Ascending aorta (tissue), 2 donors: ENCODE measurements at regions of chr17 and their contacts with region 1.

Region 1: GRCh38 chr17:47895856-47896671 is at the start of gene SP2:
- DNase-seq: peak; percentile 100
- H3K4me3 ChIP-seq: peak within 1 kb of the TSS; percentile 76 to 84
- H3K27ac ChIP-seq: peak within 1 kb of the TSS; percentile 96 to 100
- H3K4me1 ChIP-seq: peaks cover 4 to 35% of the 10 kb centered on the region in 2 donors
- H3K27me3 ChIP-seq: no peaks in the 10 kb centered on the region
- CTCF ChIP-seq: peak in 1 of 3 experiments; percentile 6
- total RNA-seq, gene SP2: 198 TPM

Region 2: GRCh38 chr17:47698749-47699535 is 197.1 kb before region 1 on chr17:
- intact Hi-C with region 1: loop called (anchors 10 kb)
- DNase-seq: no peak
- H3K4me3 ChIP-seq: no peak overlapping the region
- H3K27ac ChIP-seq: no peak overlapping the region
- H3K4me1 ChIP-seq: peaks cover 4 to 5% of the 10 kb centered on the region in 2 donors
- H3K27me3 ChIP-seq: no peaks in the 10 kb centered on the region
- CTCF ChIP-seq: peak; percentile 66 to 98 (median 98)

Region 3: GRCh38 chr17:47872021-47872650 is 23.9 kb before region 1 on chr17:
- intact Hi-C with region 1: no loop called
- DNase-seq: no peak
- H3K4me3 ChIP-seq: no peak overlapping the region
- H3K27ac ChIP-seq: no peak overlapping the region
- H3K4me1 ChIP-seq: peaks cover 0 to 6% of the 10 kb centered on the region in 2 donors
- H3K27me3 ChIP-seq: peaks cover 8% of the 10 kb centered on the region
- CTCF ChIP-seq: no peak

Region 4: DNA sequence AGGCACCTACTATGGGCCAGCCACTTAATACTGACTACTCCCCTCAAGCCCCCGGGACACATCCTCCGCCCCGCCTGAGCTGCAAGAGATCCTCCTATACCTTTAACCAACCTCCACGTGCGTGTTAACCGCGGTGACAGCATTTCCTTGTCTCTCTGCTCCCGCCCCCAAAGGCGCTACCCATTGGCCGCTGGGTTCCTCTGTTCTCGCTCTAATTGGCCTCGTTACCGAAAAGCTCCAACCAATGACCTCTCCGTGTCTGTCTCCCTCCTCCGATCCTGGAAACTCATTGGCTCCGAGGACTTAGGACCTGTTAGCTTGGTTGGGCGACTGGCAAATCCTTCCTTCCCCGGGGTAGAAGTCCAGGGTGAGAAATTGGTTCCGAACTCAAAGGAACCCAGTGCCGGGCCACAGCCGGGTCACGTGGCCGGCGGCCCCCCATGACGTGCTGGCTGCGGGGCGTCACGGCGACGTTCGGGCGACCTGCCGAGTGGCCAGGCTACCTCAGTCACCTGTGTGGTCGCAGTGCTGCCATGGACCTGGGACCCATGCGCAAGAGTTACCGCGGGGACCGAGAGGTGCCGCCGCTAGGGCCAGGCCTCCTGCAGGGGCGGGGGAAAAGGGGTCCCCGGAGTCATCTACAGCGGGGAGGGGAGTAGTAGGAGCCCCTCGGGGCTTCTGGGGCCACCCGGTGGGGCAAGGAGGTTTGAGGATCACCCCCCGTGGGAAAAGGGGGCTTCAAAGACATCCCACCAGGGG is 45.4 kb after region 1 on chr17 and contains the start of gene PNPO:
- intact Hi-C with region 1: loop called (anchors 1 kb)
- DNase-seq: peak; percentile 94 to 98
- H3K4me3 ChIP-seq: peak within 1 kb of the TSS; percentile 93 to 96
- H3K27ac ChIP-seq: peak within 1 kb of the TSS; percentile 69 to 84
- H3K4me1 ChIP-seq: peaks cover 7 to 12% of the 10 kb centered on the region in 2 donors
- H3K27me3 ChIP-seq: no peaks in the 10 kb centered on the region
- CTCF ChIP-seq: peak in 1 of 3 experiments; percentile 4
- total RNA-seq, gene PNPO: 36.7 TPM

Region 5: DNA sequence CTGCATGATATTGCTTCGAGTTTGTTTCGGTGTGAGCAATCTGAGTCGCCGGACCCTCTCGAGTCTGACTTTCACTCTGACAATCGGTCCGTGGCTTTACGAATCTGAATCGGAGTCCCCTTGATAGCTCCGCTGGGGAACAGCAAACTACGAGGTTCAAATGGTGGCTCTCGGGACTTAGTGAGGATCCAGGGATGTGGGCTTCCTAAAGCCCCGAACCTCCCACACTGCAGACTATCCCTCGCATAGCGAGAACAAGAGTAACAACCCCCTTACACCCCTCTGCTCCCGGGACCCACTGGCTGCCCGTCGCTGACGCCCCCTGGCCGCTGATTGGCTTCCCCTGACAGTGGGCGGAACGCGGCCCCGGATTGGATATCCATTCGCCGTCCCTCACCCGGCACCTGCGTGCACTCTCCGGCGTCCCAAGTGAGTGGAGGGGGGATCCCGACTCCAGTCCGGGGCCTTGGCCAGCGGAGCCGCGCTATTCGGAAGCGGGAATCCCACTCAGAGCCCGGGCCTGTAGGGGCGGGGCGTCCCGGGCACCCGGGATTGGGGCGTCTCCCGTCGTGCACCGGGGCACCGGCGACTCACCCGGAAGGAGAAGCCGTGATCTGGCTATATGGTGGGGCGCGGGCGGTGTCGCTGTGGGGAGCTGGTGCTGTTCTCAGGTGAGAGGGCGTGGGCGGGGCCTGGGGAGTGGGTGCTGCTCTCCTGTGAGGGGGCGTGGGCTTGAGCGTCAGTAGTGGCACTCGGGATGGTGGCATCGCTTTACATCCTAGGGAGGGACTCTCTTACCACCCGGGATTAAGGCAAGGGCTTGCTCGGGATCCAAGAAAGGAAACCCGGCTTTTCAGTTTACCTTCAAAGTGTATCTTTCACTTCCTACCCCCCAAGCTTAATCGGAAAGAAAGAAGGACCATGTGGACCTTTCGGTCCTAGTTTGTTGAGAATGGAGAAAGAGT is 211.4 kb after region 1 on chr17 and contains the start of gene SNX11:
- intact Hi-C with region 1: loop called (anchors 5 kb)
- DNase-seq: peak; percentile 79 to 94
- H3K4me3 ChIP-seq: peak within 1 kb of the TSS; percentile 65 to 84
- H3K27ac ChIP-seq: peak within 1 kb of the TSS; percentile 92 to 95
- H3K4me1 ChIP-seq: peaks cover 5 to 10% of the 10 kb centered on the region in 2 donors
- H3K27me3 ChIP-seq: no peaks in the 10 kb centered on the region
- CTCF ChIP-seq: no peak
- total RNA-seq, gene SNX11: 6.6 TPM